OCI-LY7 (cell line): ENCODE measurements at regions of chr22 and their contacts with region 1.

Region 1: DNA sequence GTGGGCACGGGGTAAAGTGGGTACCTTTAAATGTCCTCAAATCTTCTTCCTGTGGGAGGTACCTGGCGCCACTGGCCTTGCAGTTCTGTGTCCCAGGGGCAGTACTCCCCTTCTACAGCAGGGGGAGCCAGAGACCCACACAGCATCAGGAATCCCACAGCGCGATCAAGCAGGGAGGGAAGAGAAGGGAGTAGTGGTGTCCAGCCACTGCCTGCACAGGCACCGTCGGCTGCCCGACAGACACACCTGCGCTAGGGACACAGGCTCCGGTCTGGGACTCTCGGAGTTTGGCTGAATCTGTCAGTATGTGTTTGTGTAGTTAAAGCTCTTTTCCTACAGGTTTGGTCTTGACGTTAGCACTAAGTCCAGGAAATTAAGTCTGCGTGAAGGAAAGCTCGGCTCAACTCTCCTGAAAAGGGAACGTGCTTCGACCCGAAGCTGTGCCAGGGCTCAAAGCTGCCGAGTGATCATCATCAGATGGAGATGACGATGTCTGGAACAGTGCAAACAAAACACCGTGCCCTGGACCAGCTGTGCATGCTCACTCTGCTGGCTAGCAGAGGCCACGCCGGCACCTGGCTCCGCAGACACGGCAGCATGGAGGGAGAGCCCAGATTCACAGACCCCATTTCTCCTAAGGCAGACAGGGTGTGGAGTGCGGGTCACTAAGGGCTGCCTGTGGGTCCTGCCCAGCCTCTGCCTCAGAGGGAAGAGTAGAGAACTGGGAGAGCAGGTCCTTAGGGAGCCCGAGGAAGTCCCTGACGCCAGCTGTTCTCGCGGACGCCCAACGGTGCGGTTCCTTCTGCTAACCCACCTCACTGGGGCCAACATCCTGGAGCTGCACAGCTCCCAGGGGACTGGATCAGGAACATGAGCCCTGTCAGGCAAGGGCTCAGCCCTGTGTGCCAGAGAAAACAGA is 56.0 kb upstream of the BID start:
- DNase-seq: peak; percentile 80
- H3K4me3 ChIP-seq: no peak overlapping the region
- H3K27ac ChIP-seq: no peak overlapping the region
- H3K4me1 ChIP-seq: no peaks in the 10 kb centered on the region
- CTCF ChIP-seq: peak; percentile 94

Region 2: DNA sequence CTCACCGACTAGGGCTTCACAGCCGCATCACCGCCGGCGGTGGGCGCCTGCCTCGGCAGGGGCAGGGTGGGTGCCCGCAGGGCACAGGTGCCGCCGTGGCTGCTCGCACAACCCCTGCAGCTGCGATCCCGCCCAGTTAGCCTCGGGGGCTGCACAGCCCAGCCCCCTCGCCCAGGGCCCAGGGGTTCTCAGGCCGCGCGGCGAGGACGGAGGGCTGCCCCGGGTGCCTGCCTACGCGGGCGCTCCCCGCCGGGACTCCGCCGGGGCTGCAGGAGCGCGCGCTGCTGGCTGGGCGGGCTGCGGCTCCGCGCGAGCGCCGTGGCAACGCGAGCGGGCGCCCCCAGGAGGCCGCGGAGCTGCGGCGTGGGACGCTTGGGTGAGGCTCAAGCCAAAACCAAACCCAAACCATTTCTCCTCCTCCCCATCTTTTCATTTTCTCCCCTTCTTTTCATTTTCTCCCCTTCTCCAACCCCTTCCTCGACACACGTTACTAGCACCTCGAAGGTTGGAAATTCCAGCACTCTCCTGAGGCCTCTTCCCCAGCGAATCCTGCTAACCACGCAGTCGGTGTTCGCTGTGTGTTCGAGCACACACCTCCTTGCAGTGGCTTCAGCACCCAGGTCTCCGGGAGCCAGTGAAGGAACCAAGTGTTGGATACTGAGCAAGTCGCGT is 194.1 kb after region 1 on chr22 and contains the start of gene MICAL3:
- CTCF ChIA-PET with region 1: no interaction called
- POLR2A ChIA-PET with region 1: no interaction called
- intact Hi-C with region 1: loop called (anchors 1 kb)
- DNase-seq: peak; percentile 88
- H3K4me3 ChIP-seq: peak within 1 kb of the TSS; percentile 68
- H3K27ac ChIP-seq: peak within 1 kb of the TSS; percentile 57
- H3K4me1 ChIP-seq: peaks cover 60% of the 10 kb centered on the region
- CTCF ChIP-seq: peak; percentile 76
- total RNA-seq, gene MICAL3: 80.9 and 93.2 TPM in 2 replicates

Region 3: GRCh38 chr22:18152519-18152918 is 322.2 kb after region 1 on chr22:
- CTCF ChIA-PET with region 1: no interaction called
- POLR2A ChIA-PET with region 1: interaction called, 7 read pairs
- intact Hi-C with region 1: loop called (anchors 5 kb)
- DNase-seq: no peak
- H3K4me3 ChIP-seq: no peak overlapping the region
- H3K27ac ChIP-seq: no peak overlapping the region
- H3K4me1 ChIP-seq: peaks cover 6% of the 10 kb centered on the region
- CTCF ChIP-seq: no peak